Psoas muscle (tissue), 8 donors: ENCODE measurements at regions of chr7 and their contacts with region 1.

Region 1: DNA sequence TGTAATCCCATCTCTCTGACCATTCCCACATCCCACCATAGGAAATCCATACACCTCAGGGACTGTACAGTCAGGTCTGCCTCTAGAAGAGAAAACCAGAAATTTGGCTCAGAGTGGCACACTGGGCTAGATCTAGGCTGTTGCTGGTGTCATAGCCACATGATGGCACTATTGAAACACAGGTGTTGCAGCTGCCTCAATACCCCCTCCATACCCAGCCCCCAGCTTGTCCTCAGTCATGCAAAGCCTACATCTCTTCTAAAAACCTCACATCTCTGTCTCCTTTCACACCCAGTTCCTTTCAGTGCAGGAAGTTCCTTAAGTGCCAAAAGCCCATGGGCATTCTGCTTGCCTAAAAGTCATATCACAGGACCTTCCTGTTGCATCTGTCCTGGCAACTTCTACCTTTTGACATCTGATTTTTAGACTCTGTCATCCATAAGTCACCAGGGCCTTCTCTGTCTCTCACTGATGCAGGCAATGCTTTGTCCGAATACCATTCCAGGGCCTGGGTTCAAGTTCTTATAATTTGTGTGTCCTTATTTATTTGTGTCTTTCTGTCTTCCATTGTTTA is 27.0 kb upstream of the HIBADH start:
- DNase-seq: no peak
- ATAC-seq: peak in 3 of 4 donors; percentile 36 to 57 (median 54)
- H3K4me3 ChIP-seq: no peak overlapping the region
- H3K27ac ChIP-seq: no peak overlapping the region
- H3K4me1 ChIP-seq: no peaks in the 10 kb centered on the region
- H3K27me3 ChIP-seq: no peaks in the 10 kb centered on the region
- CTCF ChIP-seq: peak; percentile 19

Region 2: DNA sequence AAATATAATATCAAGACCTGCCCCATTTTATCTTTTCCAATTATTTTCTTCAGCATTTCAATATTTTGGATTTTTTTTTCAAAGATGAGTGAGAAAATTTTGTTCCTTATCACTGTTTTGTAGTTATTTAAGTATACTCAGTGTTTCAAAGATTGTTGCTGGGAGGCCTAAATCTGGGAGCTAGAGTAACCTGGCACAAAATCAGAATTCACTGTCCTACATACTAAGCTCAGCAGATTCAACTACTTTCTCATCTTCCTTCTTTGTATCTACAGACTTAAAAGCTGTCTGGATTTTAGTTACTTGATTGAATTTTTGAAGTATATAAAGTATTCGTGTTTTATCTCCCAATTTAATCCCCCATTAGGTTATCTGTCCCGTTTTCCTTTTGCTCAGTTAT is 136.2 kb after region 1 on chr7:
- intact Hi-C with region 1: no loop called
- DNase-seq: no peak
- ATAC-seq: peak in 1 of 4 donors; percentile 48
- H3K4me3 ChIP-seq: no peak overlapping the region
- H3K27ac ChIP-seq: no peak overlapping the region
- H3K4me1 ChIP-seq: no peaks in the 10 kb centered on the region
- H3K27me3 ChIP-seq: no peaks in the 10 kb centered on the region
- CTCF ChIP-seq: no peak

Region 3: DNA sequence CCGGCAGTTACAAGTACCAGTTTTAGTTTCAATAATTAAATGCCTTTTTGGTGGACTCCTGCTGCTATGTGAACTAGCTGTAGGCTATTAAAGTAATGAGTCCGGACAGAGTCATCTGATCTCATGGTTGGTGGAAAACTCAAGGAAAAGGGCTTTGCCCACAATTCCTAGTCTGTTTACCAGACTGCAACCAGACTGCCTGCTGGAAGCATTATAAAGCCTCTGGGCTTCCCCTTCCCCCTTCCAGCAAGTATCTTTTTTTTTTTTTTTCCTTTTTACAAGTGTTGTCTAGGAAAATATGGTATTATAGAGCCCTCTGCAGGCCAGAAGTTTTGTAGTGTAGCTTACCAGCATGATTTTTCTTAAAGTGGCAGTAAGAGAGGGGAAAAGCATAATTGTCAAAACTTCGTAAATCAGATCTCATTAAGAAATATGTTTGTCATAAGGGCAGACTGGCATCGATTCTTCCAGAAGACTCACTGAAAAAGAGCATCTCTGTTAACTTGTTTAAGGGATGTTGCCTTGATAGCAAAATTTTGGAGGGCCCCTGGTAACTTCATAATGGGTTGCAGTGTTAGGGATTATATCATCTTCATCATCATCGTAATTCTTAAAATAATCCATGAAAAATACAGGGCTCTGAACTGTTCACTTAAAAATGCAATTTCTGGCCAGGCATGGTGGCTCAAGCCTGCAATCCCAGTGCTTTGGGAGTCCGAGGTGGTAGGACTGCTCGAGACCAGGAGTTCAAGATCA is 231.6 kb after region 1 on chr7:
- intact Hi-C with region 1: loop called in 1 of 2 experiments (anchors 10 kb)
- DNase-seq: no peak
- ATAC-seq: peak; percentile 52 to 87 (median 60)
- H3K4me3 ChIP-seq: peak overlapping the region; percentile 17
- H3K27ac ChIP-seq: no peak overlapping the region
- H3K4me1 ChIP-seq: no peaks in the 10 kb centered on the region
- H3K27me3 ChIP-seq: no peaks in the 10 kb centered on the region
- CTCF ChIP-seq: peak; percentile 60